ENCODE measurements at regions of chr6 and their contacts with region 1.

Region 1: GRCh38 chr6:134938896-134939295 is 11.0 kb downstream of the ALDH8A1 start:
- DNase-seq: peak; percentile 58
- H3K4me3 Mint-ChIP-seq: no peak overlapping the region
- H3K27ac Mint-ChIP-seq: no peak overlapping the region
- H3K4me1 Mint-ChIP-seq: peaks cover 11% of the 10 kb centered on the region
- H3K27me3 Mint-ChIP-seq: no peaks in the 10 kb centered on the region

Region 2: GRCh38 chr6:134123666-134124208 is 815.2 kb before region 1 on chr6:
- CTCF ChIA-PET with region 1: interaction called, 18 read pairs
- DNase-seq: no peak
- H3K4me3 Mint-ChIP-seq: no peak overlapping the region
- H3K27ac Mint-ChIP-seq: no peak overlapping the region
- H3K4me1 Mint-ChIP-seq: no peaks in the 10 kb centered on the region
- H3K27me3 Mint-ChIP-seq: peaks cover 5% of the 10 kb centered on the region

Region 3: DNA sequence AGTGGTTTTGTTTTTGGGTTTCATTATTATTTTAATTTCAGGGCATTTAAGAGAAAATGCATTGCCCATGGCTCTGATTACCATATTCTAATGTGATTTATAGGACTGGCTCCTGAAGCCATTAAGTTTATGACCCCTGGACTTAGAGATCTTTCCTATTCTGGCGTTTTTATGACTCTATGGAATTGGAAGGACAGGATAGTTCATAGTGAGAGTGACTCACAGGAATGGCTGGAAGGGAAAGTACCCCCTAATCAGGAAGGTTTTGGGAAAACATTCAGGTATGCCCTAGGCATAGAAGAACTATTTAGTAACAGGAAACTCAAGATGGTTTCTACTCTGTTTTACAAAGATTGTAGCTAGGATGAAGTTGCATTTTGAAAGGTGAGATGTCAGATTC is 777.9 kb before region 1 on chr6:
- CTCF ChIA-PET with region 1: interaction called, 21 read pairs
- DNase-seq: no peak
- H3K4me3 Mint-ChIP-seq: no peak overlapping the region
- H3K27ac Mint-ChIP-seq: no peak overlapping the region
- H3K4me1 Mint-ChIP-seq: no peaks in the 10 kb centered on the region
- H3K27me3 Mint-ChIP-seq: no peaks in the 10 kb centered on the region

Region 4: GRCh38 chr6:134174672-134175198 is 764.2 kb before region 1 on chr6:
- CTCF ChIA-PET with region 1: interaction called, 10 read pairs
- DNase-seq: peak; percentile 93
- H3K4me3 Mint-ChIP-seq: peak overlapping the region; percentile 99
- H3K27ac Mint-ChIP-seq: peak overlapping the region; percentile 98
- H3K4me1 Mint-ChIP-seq: peaks cover 79% of the 10 kb centered on the region
- H3K27me3 Mint-ChIP-seq: peaks cover 3% of the 10 kb centered on the region

Region 5: DNA sequence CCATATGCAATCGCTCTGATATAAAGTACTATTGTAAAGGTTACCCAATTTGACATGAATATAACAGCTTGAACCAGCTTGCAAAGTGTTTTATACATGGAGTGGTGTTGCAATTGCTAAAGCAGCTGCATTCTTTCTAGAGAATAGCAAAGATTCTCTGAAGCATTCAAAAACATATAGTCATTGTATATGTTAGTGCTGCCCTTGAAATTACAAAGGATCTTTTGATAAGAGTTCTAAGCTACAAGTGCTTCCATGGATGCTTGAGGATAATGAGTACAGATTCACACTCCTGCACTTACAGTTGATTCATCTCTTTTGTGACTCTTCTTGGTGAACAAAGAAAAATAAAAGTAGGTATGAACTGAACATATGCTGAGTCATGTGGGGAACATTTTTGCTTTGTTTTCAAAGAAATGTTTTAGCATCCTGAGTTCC is 164.7 kb before region 1 on chr6:
- CTCF ChIA-PET with region 1: no interaction called
- DNase-seq: no peak
- H3K4me3 Mint-ChIP-seq: no peak overlapping the region
- H3K27ac Mint-ChIP-seq: no peak overlapping the region
- H3K4me1 Mint-ChIP-seq: no peaks in the 10 kb centered on the region
- H3K27me3 Mint-ChIP-seq: no peaks in the 10 kb centered on the region

Region 6: GRCh38 chr6:134822920-134823709 is 115.8 kb before region 1 on chr6:
- CTCF ChIA-PET with region 1: interaction called, 24 read pairs
- DNase-seq: peak; percentile 43
- H3K4me3 Mint-ChIP-seq: no peak overlapping the region
- H3K27ac Mint-ChIP-seq: no peak overlapping the region
- H3K4me1 Mint-ChIP-seq: no peaks in the 10 kb centered on the region
- H3K27me3 Mint-ChIP-seq: peaks cover 8% of the 10 kb centered on the region

Region 7: GRCh38 chr6:134882426-134883038 is 56.4 kb before region 1 on chr6:
- CTCF ChIA-PET with region 1: interaction called, 18 read pairs
- DNase-seq: peak; percentile 71
- H3K4me3 Mint-ChIP-seq: no peak overlapping the region
- H3K27ac Mint-ChIP-seq: no peak overlapping the region
- H3K4me1 Mint-ChIP-seq: no peaks in the 10 kb centered on the region
- H3K27me3 Mint-ChIP-seq: peaks cover 13% of the 10 kb centered on the region

Region 8: DNA sequence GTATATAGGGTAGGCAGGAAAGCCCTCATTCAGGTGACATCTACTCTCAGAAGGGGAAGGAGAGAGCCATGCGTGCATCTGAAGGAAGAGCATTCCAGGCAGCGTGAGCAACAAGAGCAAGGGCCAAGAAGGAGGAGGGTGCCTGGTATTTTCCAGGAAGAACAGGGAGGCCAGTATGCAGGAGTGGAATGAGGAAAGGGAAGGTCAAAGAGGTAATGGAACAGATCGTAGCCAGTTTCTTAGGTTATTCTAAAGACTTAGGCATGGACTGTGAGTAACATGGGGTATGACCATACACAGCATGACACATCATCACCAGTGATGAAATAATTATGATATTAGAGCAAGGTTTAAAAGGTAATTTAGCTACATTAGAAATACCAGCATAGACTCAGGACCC is 13.1 kb before region 1 on chr6:
- CTCF ChIA-PET with region 1: interaction called, 16 read pairs
- DNase-seq: no peak
- H3K4me3 Mint-ChIP-seq: no peak overlapping the region
- H3K27ac Mint-ChIP-seq: no peak overlapping the region
- H3K4me1 Mint-ChIP-seq: peaks cover 6% of the 10 kb centered on the region
- H3K27me3 Mint-ChIP-seq: no peaks in the 10 kb centered on the region